ENCODE measurements at regions of chr15 and their contacts with region 1.

Region 1: DNA sequence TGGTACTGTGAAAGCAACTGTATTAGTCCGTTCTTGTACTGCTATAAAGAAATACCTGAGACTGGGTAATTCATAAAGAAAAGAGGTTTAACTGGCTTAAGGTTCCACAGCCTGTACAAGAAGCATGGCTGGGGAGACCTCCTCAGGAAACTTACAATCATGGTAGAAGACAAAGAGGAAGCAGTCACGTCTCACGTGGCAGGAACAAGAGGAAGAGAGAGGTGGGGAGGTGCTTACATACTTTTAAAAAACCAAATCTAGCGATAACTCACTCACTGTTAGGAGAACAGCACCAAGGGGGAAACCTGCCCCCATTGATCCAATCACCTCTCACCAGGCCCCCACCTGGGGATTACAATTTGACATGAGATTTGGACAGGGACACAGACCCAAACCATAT is 48.9 kb downstream of the IQGAP1 start:
- DNase-seq: no peak
- H3K4me3 ChIP-seq: no peak overlapping the region
- CTCF ChIP-seq: no peak

Region 2: DNA sequence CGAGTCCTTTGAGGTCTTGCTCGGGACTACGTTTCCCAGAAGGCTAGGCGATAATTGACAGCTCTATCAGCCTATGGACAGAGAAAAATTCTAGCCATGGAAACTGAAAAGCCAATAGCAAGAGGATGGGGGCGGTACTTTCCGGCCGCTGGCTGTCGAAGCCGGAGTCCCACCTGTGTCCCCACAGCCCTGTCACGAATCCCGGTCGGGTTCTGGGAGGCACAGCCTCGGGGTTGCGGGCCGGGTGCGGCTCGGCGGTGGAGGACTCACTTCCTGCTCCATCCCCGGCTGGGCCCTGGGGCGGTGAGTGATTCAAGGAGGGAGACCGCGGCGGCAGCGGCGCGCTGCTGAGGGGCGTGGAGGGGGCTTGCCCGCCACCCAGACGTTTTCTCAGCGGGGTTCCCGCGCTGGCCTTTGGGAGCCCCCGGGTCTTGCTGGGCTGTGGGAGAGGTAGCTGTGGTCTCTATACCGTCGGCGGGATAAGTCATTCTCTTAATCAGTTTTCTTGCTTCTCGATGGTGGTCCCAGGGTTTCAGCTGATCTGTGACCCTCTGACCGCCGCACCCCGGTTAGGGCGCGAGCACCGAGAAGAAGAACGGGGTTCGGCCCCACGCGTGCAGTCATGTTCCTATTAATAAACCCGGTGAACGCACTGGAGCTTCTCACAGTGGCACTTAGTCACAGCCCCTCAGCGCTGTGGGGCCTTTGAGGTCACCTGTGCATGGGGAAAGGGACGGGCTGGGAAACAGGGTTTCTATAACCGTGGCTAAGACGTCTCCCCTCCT is 84.7 kb before region 1 on chr15 and contains the start of gene ZNF774:
- in situ Hi-C with region 1: loop called (anchors 5 kb)
- DNase-seq: peak; percentile 90
- H3K4me3 ChIP-seq: peak within 1 kb of the TSS; percentile 88
- CTCF ChIP-seq: no peak

Region 3: GRCh38 chr15:90382305-90382704 is 54.6 kb before region 1 on chr15:
- in situ Hi-C with region 1: loop called (anchors 5 kb)
- DNase-seq: no peak
- H3K4me3 ChIP-seq: no peak overlapping the region
- CTCF ChIP-seq: no peak

Region 4: GRCh38 chr15:90512276-90512675 is 75.3 kb after region 1 on chr15:
- in situ Hi-C with region 1: no loop called
- DNase-seq: no peak
- H3K4me3 ChIP-seq: no peak overlapping the region
- CTCF ChIP-seq: no peak

Measured in astrocyte of the cerebellum (primary cell).